ENCODE measurements at regions of chr9 and their contacts with region 1.

Region 1: DNA sequence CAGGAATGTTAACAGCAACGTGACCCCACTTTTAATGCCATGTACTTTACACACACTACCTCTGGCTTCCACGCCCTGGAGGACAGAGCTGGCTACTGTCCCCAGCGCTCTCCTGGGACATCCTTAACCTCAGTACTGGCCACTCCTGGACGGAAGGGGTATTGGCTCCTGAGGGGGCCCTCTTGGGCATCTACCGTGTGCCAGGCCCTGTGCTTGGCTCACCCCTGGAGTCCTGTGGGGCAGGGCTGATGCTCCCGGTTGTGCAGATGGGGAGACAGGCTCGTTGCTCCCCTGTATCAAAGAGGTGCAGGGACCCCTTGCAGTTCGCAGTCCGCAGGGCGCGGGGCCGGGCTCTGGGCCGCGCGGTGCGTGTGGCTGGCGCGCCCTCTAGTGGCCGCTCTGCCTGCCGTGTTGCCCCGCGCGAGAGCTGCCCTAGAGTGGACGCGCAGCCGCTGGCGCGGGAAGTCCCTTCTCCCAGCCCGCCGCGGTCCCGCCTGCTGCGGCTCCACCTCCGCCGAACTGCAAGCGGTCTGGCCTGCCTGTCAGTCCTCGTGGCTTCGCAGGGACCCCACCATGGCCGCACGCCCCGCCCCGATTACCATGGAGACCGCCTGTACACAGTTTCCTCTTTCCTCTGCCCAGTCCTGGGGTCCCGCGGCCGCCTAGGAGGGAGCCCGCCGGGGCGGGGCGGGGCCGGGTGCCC is at the start of gene WDR38:
- DNase-seq: peak; percentile 87 to 98
- ATAC-seq: peak; percentile 73 to 85
- H3K4me3 ChIP-seq: peak within 1 kb of the TSS; percentile 45
- H3K27ac ChIP-seq: peak within 1 kb of the TSS; percentile 53 to 81
- H3K4me1 ChIP-seq: peaks cover 30% of the 10 kb centered on the region
- CTCF ChIP-seq: peak; percentile 100
- EP300 ChIP-seq: no peak
- POLR2A ChIP-seq: no peak
- RAD21 ChIP-seq: peak; percentile 93 to 100
- polyA plus RNA-seq, gene WDR38: not detected in 2 replicates

Region 2: GRCh38 chr9:124764774-124765438 is 88.1 kb before region 1 on chr9:
- CTCF ChIA-PET with region 1: interaction called, 2,512 read pairs
- POLR2A ChIA-PET with region 1: no interaction called
- DNase-seq: peak; percentile 50 to 53
- ATAC-seq: peak; percentile 54 to 76; a peak in 4 of 6 replicates
- H3K4me3 ChIP-seq: no peak overlapping the region
- H3K27ac ChIP-seq: no peak overlapping the region
- H3K4me1 ChIP-seq: peaks cover 22% of the 10 kb centered on the region; the same call in 2 of the 3 replicates
- CTCF ChIP-seq: peak; percentile 50
- EP300 ChIP-seq: no peak
- POLR2A ChIP-seq: no peak
- RAD21 ChIP-seq: peak; percentile 53 to 61

Region 3: GRCh38 chr9:124776954-124777665 is 75.9 kb before region 1 on chr9 and contains the start of gene OLFML2A:
- CTCF ChIA-PET with region 1: interaction called, 2,512 read pairs
- POLR2A ChIA-PET with region 1: interaction called, 52 read pairs
- DNase-seq: peak; percentile 41 to 58
- ATAC-seq: peak; percentile 45 to 52
- H3K4me3 ChIP-seq: peak within 1 kb of the TSS; percentile 67
- H3K27ac ChIP-seq: peak within 1 kb of the TSS; percentile 81 to 88
- H3K4me1 ChIP-seq: peaks cover 54% of the 10 kb centered on the region
- CTCF ChIP-seq: peak; percentile 69
- EP300 ChIP-seq: no peak
- POLR2A ChIP-seq: peak; percentile 44
- RAD21 ChIP-seq: peak; percentile 23 to 37; a peak in 3 of 5 replicates
- polyA plus RNA-seq, gene OLFML2A: 8.2 and 11.8 TPM in 2 replicates

Region 4: GRCh38 chr9:124818431-124819281 is 34.3 kb before region 1 on chr9:
- CTCF ChIA-PET with region 1: interaction called, 132 read pairs
- POLR2A ChIA-PET with region 1: interaction called, 4 read pairs
- DNase-seq: peak in 1 of 2 experiments; percentile 67
- ATAC-seq: peak; percentile 80 to 81
- H3K4me3 ChIP-seq: no peak overlapping the region
- H3K27ac ChIP-seq: peak overlapping the region; percentile 53 to 86
- H3K4me1 ChIP-seq: peaks cover 20% of the 10 kb centered on the region
- CTCF ChIP-seq: peak; percentile 13; the same call in 1 of the 3 replicates
- EP300 ChIP-seq: no peak
- POLR2A ChIP-seq: no peak
- RAD21 ChIP-seq: 0 out of 5 replicates have a peak, but pooled peaks have one; percentile 17

Region 5: GRCh38 chr9:124894741-124895170 is 41.8 kb after region 1 on chr9:
- CTCF ChIA-PET with region 1: interaction called, 10 read pairs
- POLR2A ChIA-PET with region 1: no interaction called
- DNase-seq: peak in 1 of 2 experiments; percentile 59
- ATAC-seq: peak; percentile 88 to 91
- H3K4me3 ChIP-seq: no peak overlapping the region
- H3K27ac ChIP-seq: no peak overlapping the region
- H3K4me1 ChIP-seq: no peaks in the 10 kb centered on the region; the same call in 2 of the 3 replicates
- CTCF ChIP-seq: peak; percentile 53
- EP300 ChIP-seq: no peak
- POLR2A ChIP-seq: no peak
- RAD21 ChIP-seq: peak; percentile 39 to 67; a peak in 4 of 5 replicates

Measured in A549 (cell line).